Aorta (tissue), 5 donors: ENCODE measurements at regions of chr1 and their contacts with region 1.

Region 1: DNA sequence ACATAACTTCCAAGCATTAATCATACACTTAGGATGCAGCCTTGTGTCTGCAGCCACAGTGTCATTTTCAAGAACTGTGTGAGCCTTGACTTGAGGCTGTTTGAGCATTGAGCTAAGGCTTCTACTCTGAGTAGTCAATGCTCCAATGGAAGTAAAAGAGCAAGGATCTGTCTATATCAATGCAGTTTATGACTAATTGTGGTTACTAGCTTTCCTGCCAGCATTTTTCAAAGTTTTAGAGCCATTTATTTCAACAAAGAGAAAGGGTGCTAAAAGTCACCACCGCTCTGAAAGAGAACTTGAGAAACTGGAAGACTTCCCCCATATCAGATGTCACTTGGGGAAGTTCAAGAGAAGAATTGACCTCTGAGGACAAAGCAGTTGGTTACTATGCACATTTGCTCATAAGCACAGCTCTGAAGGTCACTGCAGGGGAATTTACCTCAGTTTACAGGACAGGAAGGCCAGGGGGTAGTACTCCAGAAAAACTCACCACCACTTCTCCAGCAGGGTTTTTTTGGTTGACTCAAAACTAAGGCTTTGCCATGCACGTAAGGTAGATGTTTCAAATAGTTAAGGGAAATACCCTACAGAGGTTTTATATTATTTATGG is 24.5 kb upstream of the RGS1 start:
- DNase-seq: no peak
- ATAC-seq: no peak
- H3K4me3 ChIP-seq: no peak overlapping the region
- H3K27ac ChIP-seq: no peak overlapping the region
- H3K4me1 ChIP-seq: peaks cover under 1 to 5% of the 10 kb centered on the region in 2 donors
- H3K27me3 ChIP-seq: no peaks in the 10 kb centered on the region

Region 2: DNA sequence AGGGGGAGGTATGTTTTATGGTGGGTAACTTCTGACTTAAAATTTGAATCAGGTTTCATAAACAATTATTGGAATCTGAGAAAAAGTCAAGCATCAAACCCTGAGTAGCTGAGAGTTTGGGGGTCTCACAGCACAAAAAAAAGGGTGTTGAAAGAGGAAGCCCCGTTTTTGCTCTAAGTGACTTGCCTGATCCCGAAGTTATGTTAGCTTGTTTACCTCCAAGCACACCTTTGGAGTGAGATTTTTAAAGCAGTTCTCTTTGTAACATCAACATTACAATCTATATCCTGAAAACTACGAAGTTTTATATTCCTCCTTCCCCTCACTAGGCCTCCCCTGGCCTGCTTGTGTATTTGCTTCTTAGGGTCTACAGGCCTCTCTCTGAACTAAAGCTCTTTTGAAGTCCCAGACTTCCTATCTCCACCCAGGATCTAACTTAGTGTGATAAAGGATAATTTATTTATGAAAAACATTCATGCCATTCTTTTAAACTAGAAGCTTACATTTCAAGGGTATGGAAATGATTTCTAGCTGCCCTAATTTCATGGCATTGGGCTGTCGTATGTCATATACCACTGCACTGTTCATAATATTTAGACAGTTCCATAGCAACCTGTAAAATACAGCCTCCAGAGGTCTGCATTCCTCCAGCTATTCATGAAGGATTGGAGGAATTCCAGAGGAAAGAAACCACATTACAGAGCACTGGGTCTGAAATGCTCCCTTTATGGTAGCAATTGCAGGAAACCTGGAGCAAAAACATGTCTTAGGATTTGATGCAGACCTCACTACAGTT is 11.5 kb before region 1 on chr1:
- intact Hi-C with region 1: loop called in 1 of 2 experiments (anchors 2 kb)
- DNase-seq: no peak
- ATAC-seq: peak; percentile 91
- H3K4me3 ChIP-seq: no peak overlapping the region
- H3K27ac ChIP-seq: peak overlapping the region; percentile 95 to 100
- H3K4me1 ChIP-seq: peaks cover 0 to 7% of the 10 kb centered on the region in 2 donors
- H3K27me3 ChIP-seq: no peaks in the 10 kb centered on the region

Region 3: GRCh38 chr1:192808518-192809306 is 257.7 kb after region 1 on chr1 and contains the start of gene RGS2:
- intact Hi-C with region 1: no loop called
- DNase-seq: peak; percentile 95 to 96
- ATAC-seq: peak; percentile 98
- H3K4me3 ChIP-seq: peak within 1 kb of the TSS; percentile 72 to 87
- H3K27ac ChIP-seq: peak within 1 kb of the TSS in 1 of 2 donors; percentile 90
- H3K4me1 ChIP-seq: no peaks in the 10 kb centered on the region
- H3K27me3 ChIP-seq: no peaks in the 10 kb centered on the region
- total RNA-seq, gene RGS2: 56.6 to 99.1 TPM